Activated B cell treated with CpG ODN at 0.5 μM for 24 hours (primary cell): ENCODE measurements at regions of chr1 and their contacts with region 1.

Region 1: DNA sequence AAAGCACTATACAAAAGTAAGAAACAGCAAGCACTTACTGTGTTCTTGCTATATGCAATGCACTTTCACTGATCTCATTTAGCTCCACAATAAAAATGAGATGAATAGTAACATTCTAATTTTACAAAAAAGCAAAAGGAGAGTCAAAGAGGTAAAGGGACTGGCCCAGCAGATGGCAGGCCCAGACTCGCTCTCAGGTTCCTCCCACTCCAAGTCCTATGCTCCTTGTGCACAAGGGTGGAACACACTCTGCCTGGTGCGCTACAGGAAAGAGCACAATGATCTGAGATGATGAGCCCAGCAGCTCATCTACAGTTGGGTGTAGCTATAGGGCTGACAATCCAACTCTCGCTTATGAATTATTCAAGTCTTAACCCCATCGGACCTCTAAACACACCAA is 94.1 kb upstream of the LYST start:
- DNase-seq: no peak
- ATAC-seq: no peak
- H3K4me3 Mint-ChIP-seq: no peak overlapping the region
- H3K27ac Mint-ChIP-seq: no peak overlapping the region
- H3K4me1 Mint-ChIP-seq: peaks cover 23% of the 10 kb centered on the region
- H3K27me3 Mint-ChIP-seq: no peaks in the 10 kb centered on the region
- CTCF ChIP-seq: no peak

Region 2: DNA sequence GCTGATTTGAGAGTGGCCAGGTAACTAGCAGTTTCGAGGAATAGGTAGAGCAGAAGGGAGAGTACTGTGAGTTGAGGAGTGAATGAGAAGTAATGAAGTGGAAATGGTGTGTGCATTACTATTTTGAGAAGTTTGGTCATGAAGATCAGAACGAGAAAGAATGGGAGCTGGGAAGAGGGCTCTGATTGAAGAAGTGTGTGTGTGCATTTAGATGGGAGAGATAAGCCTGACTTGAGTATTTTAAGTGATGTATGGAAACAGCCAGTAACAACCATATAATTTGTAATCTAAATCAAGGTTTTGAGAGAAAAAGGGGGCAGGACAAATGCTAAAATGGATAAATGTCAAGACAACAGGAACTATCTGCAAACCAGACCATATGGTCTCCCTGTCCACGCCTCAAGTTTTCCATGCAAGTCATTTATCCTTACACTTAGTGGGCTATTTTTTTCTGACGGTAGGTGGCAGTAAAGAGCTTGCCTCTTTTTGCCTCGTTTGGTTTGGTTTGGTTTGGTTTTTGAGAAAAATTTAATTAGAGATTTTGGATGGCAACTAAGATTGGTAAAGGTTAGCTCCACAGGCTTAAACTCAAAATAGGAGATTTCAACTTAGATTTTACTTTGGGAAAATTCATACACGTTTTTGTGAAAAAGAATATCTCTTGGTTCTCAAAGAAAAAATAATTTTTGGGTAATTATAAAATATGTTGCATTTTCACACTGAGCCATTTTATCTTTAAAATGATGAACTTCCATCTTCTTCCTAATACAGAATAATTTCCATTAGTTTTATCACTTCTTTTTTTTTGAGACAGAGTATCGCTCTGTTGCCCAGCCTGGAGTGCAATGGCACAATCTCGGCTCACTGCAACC is 447.1 kb before region 1 on chr1:
- CTCF ChIA-PET with region 1: no interaction called
- POLR2A ChIA-PET with region 1: interaction called, 12 read pairs
- intact Hi-C with region 1: no loop called
- DNase-seq: no peak
- ATAC-seq: peak; percentile 68
- H3K4me3 Mint-ChIP-seq: no peak overlapping the region
- H3K27ac Mint-ChIP-seq: no peak overlapping the region
- H3K4me1 Mint-ChIP-seq: peaks cover 1% of the 10 kb centered on the region
- H3K27me3 Mint-ChIP-seq: peaks cover 5% of the 10 kb centered on the region
- CTCF ChIP-seq: peak; percentile 67

Region 3: GRCh38 chr1:235767795-235768194 is 193.0 kb before region 1 on chr1:
- CTCF ChIA-PET with region 1: no interaction called
- POLR2A ChIA-PET with region 1: interaction called, 11 read pairs
- intact Hi-C with region 1: no loop called
- DNase-seq: no peak
- ATAC-seq: peak; percentile 89
- H3K4me3 Mint-ChIP-seq: no peak overlapping the region
- H3K27ac Mint-ChIP-seq: no peak overlapping the region
- H3K4me1 Mint-ChIP-seq: peaks cover 20% of the 10 kb centered on the region
- H3K27me3 Mint-ChIP-seq: no peaks in the 10 kb centered on the region
- CTCF ChIP-seq: no peak

Region 4: DNA sequence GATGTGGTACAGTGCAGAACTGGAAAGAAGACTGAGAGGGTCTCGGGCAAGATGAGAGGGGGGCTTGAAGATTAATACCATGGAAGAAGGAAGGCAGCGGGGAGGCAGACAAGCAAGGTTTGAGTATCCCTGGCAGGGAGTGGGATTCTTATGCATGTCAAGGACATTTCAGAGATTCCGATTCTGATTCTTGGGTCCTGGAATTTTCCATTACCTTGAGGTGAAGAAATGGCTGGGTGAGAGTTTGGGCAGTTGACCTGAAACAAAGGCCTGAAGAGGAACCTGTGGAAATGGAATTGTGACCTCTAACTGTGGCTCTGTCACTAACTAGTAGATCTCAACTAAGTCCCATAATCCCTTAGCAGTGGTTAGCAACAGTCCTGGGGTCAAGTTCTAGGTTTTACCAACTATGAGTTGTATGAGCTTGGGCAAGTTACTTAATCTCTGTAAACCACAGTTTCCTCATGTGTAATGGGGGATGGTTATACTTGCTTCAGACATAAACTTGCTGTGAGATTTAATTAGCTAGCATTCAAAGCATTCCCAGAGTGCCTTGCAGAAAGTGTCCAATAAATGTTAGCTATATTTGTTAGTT is 716.9 kb after region 1 on chr1:
- CTCF ChIA-PET with region 1: no interaction called
- POLR2A ChIA-PET with region 1: no interaction called
- intact Hi-C with region 1: no loop called
- DNase-seq: no peak
- ATAC-seq: no peak
- H3K4me3 Mint-ChIP-seq: no peak overlapping the region
- H3K27ac Mint-ChIP-seq: no peak overlapping the region
- H3K4me1 Mint-ChIP-seq: no peaks in the 10 kb centered on the region
- H3K27me3 Mint-ChIP-seq: peaks cover 18% of the 10 kb centered on the region
- CTCF ChIP-seq: no peak